GM12878 (cell line): ENCODE measurements at regions of chr3 and their contacts with region 1.

Region 1: DNA sequence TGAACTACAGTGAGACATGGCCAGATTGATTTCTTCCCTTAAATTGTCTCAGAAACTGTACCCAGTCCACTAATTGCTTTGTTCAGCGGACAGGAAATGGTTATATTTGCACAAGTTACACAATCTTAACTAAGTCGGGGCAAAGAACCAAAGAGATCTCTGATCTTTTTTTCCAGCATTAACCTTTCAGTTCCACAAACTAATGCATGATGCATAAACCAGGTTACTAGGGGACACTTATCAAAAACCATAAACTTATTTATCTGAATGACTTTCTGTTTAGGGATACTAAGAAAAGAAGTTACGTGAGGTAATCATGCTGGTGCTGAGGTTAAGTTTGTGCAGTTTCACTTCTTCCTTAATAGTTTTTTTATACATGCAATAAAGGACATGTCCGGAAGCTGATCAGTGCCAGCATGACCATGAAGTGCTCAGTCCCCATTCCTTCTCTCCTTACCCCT is 22.4 kb downstream of the FNDC3B start:
- DNase-seq: peak; percentile 84
- ATAC-seq: peak; percentile 90
- H3K4me3 ChIP-seq: peak overlapping the region; percentile 9; the same call in 1 of the 2 replicates
- H3K27ac ChIP-seq: peak overlapping the region; percentile 76
- H3K4me1 ChIP-seq: peaks cover 19% of the 10 kb centered on the region
- H3K27me3 ChIP-seq: no peaks in the 10 kb centered on the region
- CTCF ChIP-seq: no peak
- EP300 ChIP-seq: peak; percentile 85 to 89
- POLR2A ChIP-seq: no peak
- RAD21 ChIP-seq: no peak

Region 2: DNA sequence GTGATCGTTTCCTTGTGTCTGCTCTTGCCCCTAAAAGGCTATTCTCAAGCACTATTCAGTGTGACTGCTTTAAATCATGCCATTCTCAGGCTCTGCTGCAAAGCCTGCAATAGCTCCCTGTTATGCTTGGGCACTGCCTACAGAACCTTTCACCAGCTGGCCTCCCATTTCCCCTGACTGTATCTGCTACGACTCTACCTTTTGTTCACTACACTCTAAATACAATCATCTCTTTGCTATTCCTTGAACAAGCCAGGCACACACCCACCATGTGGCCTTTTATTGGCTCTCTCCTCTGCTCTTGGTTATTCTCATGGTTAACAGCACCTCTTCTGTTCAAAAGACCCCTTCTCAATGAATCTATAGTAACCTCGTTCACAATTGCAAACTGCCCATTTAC is 52.0 kb before region 1 on chr3:
- CTCF ChIA-PET with region 1: no interaction called
- POLR2A ChIA-PET with region 1: no interaction called
- RAD21 ChIA-PET with region 1: no interaction called
- SMC1A ChIA-PET with region 1: no interaction called
- in situ Hi-C with region 1: no loop called
- intact Hi-C with region 1: no loop called
- DNase-seq: no peak
- ATAC-seq: no peak
- H3K4me3 ChIP-seq: no peak overlapping the region
- H3K27ac ChIP-seq: no peak overlapping the region
- H3K4me1 ChIP-seq: no peaks in the 10 kb centered on the region
- H3K27me3 ChIP-seq: no peaks in the 10 kb centered on the region
- CTCF ChIP-seq: no peak
- EP300 ChIP-seq: no peak
- POLR2A ChIP-seq: no peak
- RAD21 ChIP-seq: no peak

Region 3: DNA sequence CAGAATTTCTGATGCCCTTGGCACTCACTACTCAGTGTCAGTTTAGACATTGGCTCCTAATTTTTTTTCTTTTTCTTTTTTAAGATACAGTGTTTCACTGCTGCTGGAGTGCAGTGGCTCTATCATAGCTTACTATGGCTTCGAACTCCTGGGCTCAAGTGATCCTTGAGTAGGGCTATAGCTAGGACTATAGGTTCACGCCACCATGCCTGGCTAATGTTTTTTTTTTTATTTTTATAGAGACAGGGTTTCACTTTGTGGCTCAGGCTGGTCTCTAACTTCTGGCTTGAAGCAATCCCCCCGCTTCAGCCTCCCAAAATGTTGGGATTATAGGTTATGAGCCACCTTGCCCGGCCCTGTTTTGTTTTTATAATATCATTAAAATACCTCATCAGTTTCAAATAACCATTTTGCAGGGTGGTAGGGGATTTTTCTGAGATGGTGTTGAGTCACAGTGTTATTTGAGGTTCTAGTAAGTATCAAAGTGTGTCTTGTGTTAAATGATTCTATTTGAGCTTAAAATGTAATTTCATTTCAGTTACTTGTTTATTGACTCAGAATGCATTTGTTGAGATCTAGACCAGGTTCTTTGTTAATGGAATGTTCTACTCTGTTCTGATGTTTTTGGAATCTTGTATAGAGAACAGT is 15.4 kb before region 1 on chr3:
- CTCF ChIA-PET with region 1: interaction called, 5 read pairs
- POLR2A ChIA-PET with region 1: interaction called, 8 read pairs
- RAD21 ChIA-PET with region 1: interaction called, 12 read pairs
- SMC1A ChIA-PET with region 1: interaction called, 5 read pairs
- in situ Hi-C with region 1: no loop called
- intact Hi-C with region 1: no loop called
- DNase-seq: no peak
- ATAC-seq: peak; percentile 64
- H3K4me3 ChIP-seq: no peak overlapping the region; the same call in 1 of the 2 replicates
- H3K27ac ChIP-seq: peak overlapping the region; percentile 18; the same call in 1 of the 2 replicates
- H3K4me1 ChIP-seq: no peaks in the 10 kb centered on the region
- H3K27me3 ChIP-seq: no peaks in the 10 kb centered on the region
- CTCF ChIP-seq: no peak
- EP300 ChIP-seq: no peak
- POLR2A ChIP-seq: no peak
- RAD21 ChIP-seq: no peak

Region 4: DNA sequence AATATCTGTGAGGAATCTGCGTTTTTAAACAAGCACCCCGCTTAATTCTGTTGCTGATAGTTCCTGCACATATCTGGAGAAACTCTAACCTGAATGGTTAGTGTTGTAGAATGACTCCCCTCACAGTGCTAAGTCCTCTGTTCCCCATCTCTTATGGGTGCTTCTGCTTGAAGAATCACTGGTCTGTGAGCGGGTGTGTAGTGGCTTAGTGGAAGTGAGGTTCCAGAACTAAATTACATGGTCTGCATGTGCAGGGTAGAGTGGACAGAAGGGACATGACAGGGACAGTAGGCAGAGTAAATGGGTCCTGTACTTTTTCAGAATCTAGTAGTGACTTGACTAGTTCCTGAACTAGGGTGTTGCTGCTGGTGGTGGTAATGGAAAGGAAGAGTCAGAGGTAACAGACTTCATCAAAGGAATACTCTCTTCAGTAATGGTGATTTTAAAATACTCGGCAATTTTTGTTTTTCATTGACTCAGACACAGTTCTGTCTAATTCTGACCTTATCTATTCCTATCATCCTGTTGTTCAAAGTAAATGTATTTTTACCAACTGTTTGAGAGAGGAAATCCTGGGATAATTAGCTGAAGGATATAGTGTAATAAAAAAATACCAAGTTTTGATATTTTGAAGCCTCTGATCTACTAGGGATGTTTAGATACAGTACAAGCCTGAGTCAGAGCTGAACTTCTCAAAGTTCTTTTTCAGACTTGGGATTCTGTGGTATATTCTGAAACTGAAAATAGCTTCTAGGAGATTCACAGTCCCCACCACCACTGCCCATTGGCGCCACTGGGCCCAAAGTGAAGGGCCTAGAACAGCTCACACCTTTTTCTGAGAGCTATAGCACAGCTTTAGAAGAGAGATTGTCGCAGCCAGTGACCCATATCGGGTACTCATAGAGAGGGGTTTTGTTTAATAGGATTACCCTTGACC is 33.1 kb after region 1 on chr3:
- CTCF ChIA-PET with region 1: interaction called, 4 read pairs
- POLR2A ChIA-PET with region 1: interaction called, 5 read pairs
- RAD21 ChIA-PET with region 1: interaction called, 10 read pairs
- SMC1A ChIA-PET with region 1: interaction called, 16 read pairs
- in situ Hi-C with region 1: no loop called
- intact Hi-C with region 1: loop called (anchors 2 kb)
- DNase-seq: peak; percentile 62
- ATAC-seq: peak; percentile 96
- H3K4me3 ChIP-seq: no peak overlapping the region
- H3K27ac ChIP-seq: peak overlapping the region; percentile 54
- H3K4me1 ChIP-seq: peaks cover 35% of the 10 kb centered on the region
- H3K27me3 ChIP-seq: no peaks in the 10 kb centered on the region
- CTCF ChIP-seq: peak; percentile 8 to 31 (median 29); a peak in 4 of 6 replicates
- EP300 ChIP-seq: no peak; a peak in 1 of 4 replicates
- POLR2A ChIP-seq: no peak
- RAD21 ChIP-seq: peak; percentile 44

Region 5: DNA sequence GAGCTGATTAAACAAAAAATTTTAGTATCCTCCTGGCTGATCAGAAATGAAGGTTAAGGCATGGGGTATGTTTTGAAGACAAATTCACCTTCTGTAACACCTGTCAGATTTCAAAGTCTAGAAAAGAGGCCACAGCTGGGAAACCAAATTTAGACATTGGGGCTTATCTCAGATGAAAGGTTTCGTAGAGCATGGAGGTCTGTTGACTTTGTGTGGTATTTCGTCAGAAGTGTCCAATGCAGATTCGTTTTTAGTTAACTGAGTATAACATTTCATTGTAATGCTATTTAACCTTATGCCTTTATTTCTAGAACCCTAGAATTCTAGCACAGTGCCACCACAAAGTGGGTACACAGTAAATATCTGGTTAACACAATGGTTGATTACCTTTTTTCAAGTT is 39.4 kb after region 1 on chr3:
- CTCF ChIA-PET with region 1: interaction called, 4 read pairs
- POLR2A ChIA-PET with region 1: no interaction called
- RAD21 ChIA-PET with region 1: interaction called, 12 read pairs
- SMC1A ChIA-PET with region 1: interaction called, 16 read pairs
- in situ Hi-C with region 1: no loop called
- intact Hi-C with region 1: no loop called
- DNase-seq: peak; percentile 67
- ATAC-seq: peak; percentile 75
- H3K4me3 ChIP-seq: 0 out of 2 replicates have a peak overlapping the region, but pooled peaks have one; percentile 17
- H3K27ac ChIP-seq: peak overlapping the region; percentile 85
- H3K4me1 ChIP-seq: peaks cover 62% of the 10 kb centered on the region
- H3K27me3 ChIP-seq: no peaks in the 10 kb centered on the region
- CTCF ChIP-seq: no peak
- EP300 ChIP-seq: peak; percentile 48 to 74; a peak in 3 of 4 replicates
- POLR2A ChIP-seq: no peak
- RAD21 ChIP-seq: no peak

Region 6: GRCh38 chr3:172119266-172119969 is 57.7 kb after region 1 on chr3:
- CTCF ChIA-PET with region 1: no interaction called
- POLR2A ChIA-PET with region 1: no interaction called
- RAD21 ChIA-PET with region 1: no interaction called
- SMC1A ChIA-PET with region 1: no interaction called
- in situ Hi-C with region 1: no loop called
- intact Hi-C with region 1: no loop called
- DNase-seq: no peak
- ATAC-seq: no peak
- H3K4me3 ChIP-seq: no peak overlapping the region
- H3K27ac ChIP-seq: no peak overlapping the region
- H3K4me1 ChIP-seq: no peaks in the 10 kb centered on the region
- H3K27me3 ChIP-seq: no peaks in the 10 kb centered on the region
- CTCF ChIP-seq: no peak
- EP300 ChIP-seq: no peak
- POLR2A ChIP-seq: no peak
- RAD21 ChIP-seq: no peak

Region 7: DNA sequence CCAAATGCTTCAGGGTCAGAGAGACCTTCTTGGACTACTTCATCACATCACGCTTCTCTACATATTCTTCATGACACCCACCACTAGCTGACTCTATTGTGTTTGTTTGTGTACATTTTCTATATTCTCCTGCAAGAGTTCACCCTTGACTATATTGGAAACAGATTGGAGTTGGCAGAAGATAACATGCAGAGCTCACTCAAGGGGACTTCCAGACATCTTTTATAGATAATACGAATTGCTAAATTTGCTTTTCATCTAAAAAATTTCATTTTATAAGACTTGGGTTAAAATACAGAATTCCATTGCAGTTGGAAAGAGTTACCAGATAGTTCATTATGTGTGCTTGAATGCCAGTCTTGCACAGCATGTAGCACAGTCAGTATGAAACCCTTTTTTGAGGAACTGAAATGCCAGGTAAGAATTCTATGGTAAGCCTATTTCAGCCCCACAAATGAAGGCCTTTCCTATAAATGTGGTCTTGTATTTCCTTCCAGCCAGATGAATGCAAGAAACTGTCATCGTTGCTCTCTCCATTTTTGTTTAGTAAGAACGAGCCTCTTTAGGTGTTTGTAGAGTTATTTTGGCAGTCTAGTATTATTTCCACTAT is 208.9 kb after region 1 on chr3:
- CTCF ChIA-PET with region 1: no interaction called
- POLR2A ChIA-PET with region 1: no interaction called
- RAD21 ChIA-PET with region 1: no interaction called
- SMC1A ChIA-PET with region 1: interaction called, 4 read pairs
- in situ Hi-C with region 1: no loop called
- intact Hi-C with region 1: loop called (anchors 5 kb)
- DNase-seq: peak; percentile 66
- ATAC-seq: peak; percentile 99
- H3K4me3 ChIP-seq: no peak overlapping the region
- H3K27ac ChIP-seq: no peak overlapping the region
- H3K4me1 ChIP-seq: peaks cover 19% of the 10 kb centered on the region
- H3K27me3 ChIP-seq: no peaks in the 10 kb centered on the region
- CTCF ChIP-seq: no peak
- EP300 ChIP-seq: peak in 1 of 2 experiments; percentile 82; a peak in 2 of 4 replicates
- POLR2A ChIP-seq: no peak
- RAD21 ChIP-seq: no peak